Mammary epithelial cell (primary cell): ENCODE measurements at regions of chr11 and their contacts with region 1.

Region 1: DNA sequence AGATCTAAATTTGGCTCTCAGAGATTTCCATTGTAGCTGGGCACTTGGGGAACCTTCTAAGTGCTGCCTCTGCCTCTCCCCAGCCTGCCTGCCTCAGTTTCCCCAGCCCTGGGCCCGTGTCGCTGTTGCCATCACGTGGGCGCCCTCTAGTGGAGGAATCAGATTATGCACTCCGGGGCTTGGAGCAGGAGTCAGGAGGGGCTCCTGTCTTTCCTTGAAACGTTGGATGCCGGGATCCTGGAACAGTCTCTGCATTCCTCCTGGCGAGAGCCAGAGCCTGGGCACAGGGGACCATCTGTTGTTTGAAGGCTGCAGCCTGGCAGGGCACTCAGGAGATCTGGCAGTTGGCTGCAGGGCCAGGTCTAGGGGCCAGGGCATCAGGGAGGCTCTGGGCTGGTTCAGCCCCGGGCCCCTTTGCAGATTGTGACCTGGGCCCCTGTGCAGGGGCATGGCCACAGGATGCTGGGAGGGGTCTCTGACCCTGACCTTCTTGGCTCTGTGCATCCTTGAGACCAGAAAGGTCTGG is 71.6 kb downstream of the LRP5 start:
- DNase-seq: no peak
- H3K4me3 ChIP-seq: no peak overlapping the region
- H3K27ac ChIP-seq: no peak overlapping the region
- H3K4me1 ChIP-seq: peaks cover 14% of the 10 kb centered on the region
- H3K27me3 ChIP-seq: no peaks in the 10 kb centered on the region
- CTCF ChIP-seq: peak; percentile 75 to 94

Region 2: DNA sequence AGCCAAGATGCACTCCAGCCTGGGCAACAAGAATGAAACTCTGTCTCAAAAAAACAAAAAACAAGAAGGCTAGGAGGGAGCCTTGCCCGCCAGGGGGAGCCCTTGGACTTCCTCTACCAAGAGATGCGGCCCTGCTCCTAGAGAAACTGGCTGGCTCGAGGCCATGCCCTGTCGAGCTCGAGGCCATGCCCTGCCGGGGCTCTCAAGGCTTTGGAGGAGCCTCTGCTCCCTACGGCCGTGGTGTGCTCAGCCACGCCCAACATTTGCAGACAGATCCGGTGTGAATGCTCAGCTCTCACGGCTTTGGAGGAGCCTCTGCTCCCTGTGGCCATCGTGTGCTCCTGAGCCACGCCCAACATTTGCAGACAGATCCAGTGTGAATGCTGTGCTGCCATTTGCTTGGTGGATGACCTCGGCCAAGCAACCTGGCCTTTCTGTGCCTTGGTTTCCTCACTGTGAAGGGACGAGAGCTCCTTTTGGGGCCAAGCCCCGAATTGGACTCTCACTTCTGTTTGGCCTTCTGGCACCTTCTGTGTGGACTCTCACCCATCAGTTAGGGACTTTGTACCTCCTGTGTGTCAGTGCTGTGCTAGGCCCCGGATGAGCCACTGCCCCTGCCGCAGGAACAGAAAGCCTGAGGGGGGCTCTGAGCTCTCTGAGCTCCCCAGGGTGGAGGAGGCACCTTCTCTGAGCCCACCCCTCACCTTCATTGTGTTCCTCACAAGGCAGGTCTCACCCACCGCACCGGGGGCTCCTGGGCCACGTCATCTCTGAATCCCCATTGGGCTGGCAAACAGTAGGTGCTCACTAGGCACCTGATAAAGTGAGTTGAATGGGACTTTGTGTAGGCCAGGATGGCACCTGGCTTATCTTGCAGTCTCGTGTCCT is 126.3 kb before region 1 on chr11:
- CTCF ChIA-PET with region 1: no interaction called
- dilution Hi-C with region 1: no loop called
- in situ Hi-C with region 1: loop called (anchors 5 to 10 kb)
- intact Hi-C with region 1: loop called (anchors 1 kb)
- DNase-seq: peak; percentile 75
- H3K4me3 ChIP-seq: no peak overlapping the region
- H3K27ac ChIP-seq: no peak overlapping the region
- H3K4me1 ChIP-seq: peaks cover 4% of the 10 kb centered on the region
- H3K27me3 ChIP-seq: no peaks in the 10 kb centered on the region
- CTCF ChIP-seq: peak; percentile 65 to 83

Region 3: GRCh38 chr11:68312117-68312779 is 71.8 kb before region 1 on chr11 and contains the start of gene LRP5:
- CTCF ChIA-PET with region 1: no interaction called
- dilution Hi-C with region 1: no loop called
- in situ Hi-C with region 1: no loop called
- intact Hi-C with region 1: loop called (anchors 2 kb)
- DNase-seq: no peak
- H3K4me3 ChIP-seq: peak within 1 kb of the TSS; percentile 62 to 67 (median 64)
- H3K27ac ChIP-seq: peak within 1 kb of the TSS; percentile 69
- H3K4me1 ChIP-seq: peaks cover 35% of the 10 kb centered on the region
- H3K27me3 ChIP-seq: no peaks in the 10 kb centered on the region
- CTCF ChIP-seq: no peak
- total RNA-seq, gene LRP5: 32.6 to 41.7 TPM

Region 4: GRCh38 chr11:68338051-68338780 is 45.8 kb before region 1 on chr11:
- CTCF ChIA-PET with region 1: no interaction called
- dilution Hi-C with region 1: no loop called
- in situ Hi-C with region 1: no loop called
- intact Hi-C with region 1: loop called (anchors 5 kb)
- DNase-seq: peak; percentile 71
- H3K4me3 ChIP-seq: no peak overlapping the region
- H3K27ac ChIP-seq: peak overlapping the region; percentile 79
- H3K4me1 ChIP-seq: peaks cover 45% of the 10 kb centered on the region
- H3K27me3 ChIP-seq: no peaks in the 10 kb centered on the region
- CTCF ChIP-seq: no peak